Mammary epithelial cell (primary cell): ENCODE measurements at regions of chr19 and their contacts with region 1.

Region 1: GRCh38 chr19:46487802-46488445 is 7.7 kb downstream of the PNMA8B start:
- DNase-seq: peak; percentile 59
- H3K4me3 ChIP-seq: peak overlapping the region in 1 of 3 experiments; percentile 42
- H3K27ac ChIP-seq: no peak overlapping the region
- H3K4me1 ChIP-seq: peaks cover 6% of the 10 kb centered on the region
- H3K27me3 ChIP-seq: no peaks in the 10 kb centered on the region
- CTCF ChIP-seq: peak; percentile 86 to 95

Region 2: GRCh38 chr19:46283771-46284170 is 204.2 kb before region 1 on chr19:
- CTCF ChIA-PET with region 1: no interaction called
- dilution Hi-C with region 1: no loop called
- in situ Hi-C with region 1: no loop called
- intact Hi-C with region 1: loop called (anchors 1 kb)
- DNase-seq: no peak
- H3K4me3 ChIP-seq: no peak overlapping the region
- H3K27ac ChIP-seq: no peak overlapping the region
- H3K4me1 ChIP-seq: peaks cover under 1% of the 10 kb centered on the region
- H3K27me3 ChIP-seq: no peaks in the 10 kb centered on the region
- CTCF ChIP-seq: no peak

Region 3: GRCh38 chr19:46392243-46392801 is 95.6 kb before region 1 on chr19:
- CTCF ChIA-PET with region 1: no interaction called
- dilution Hi-C with region 1: no loop called
- in situ Hi-C with region 1: no loop called
- intact Hi-C with region 1: loop called (anchors 1 kb)
- DNase-seq: no peak
- H3K4me3 ChIP-seq: no peak overlapping the region
- H3K27ac ChIP-seq: no peak overlapping the region
- H3K4me1 ChIP-seq: no peaks in the 10 kb centered on the region
- H3K27me3 ChIP-seq: no peaks in the 10 kb centered on the region
- CTCF ChIP-seq: no peak

Region 4: GRCh38 chr19:46404055-46404752 is 83.7 kb before region 1 on chr19:
- CTCF ChIA-PET with region 1: no interaction called
- dilution Hi-C with region 1: loop called (anchors 5 kb)
- in situ Hi-C with region 1: loop called (anchors 5 kb)
- intact Hi-C with region 1: loop called (anchors 1 kb)
- DNase-seq: no peak
- H3K4me3 ChIP-seq: peak overlapping the region; percentile 18 to 49 (median 19)
- H3K27ac ChIP-seq: peak overlapping the region; percentile 14
- H3K4me1 ChIP-seq: peaks cover 29% of the 10 kb centered on the region
- H3K27me3 ChIP-seq: no peaks in the 10 kb centered on the region
- CTCF ChIP-seq: peak in 1 of 2 donors; percentile 17

Region 5: GRCh38 chr19:46447824-46448223 is 40.1 kb before region 1 on chr19:
- CTCF ChIA-PET with region 1: no interaction called
- dilution Hi-C with region 1: loop called (anchors 5 kb)
- in situ Hi-C with region 1: no loop called
- intact Hi-C with region 1: no loop called
- DNase-seq: no peak
- H3K4me3 ChIP-seq: no peak overlapping the region
- H3K27ac ChIP-seq: no peak overlapping the region
- H3K4me1 ChIP-seq: peaks cover 26% of the 10 kb centered on the region
- H3K27me3 ChIP-seq: no peaks in the 10 kb centered on the region
- CTCF ChIP-seq: no peak

Region 6: GRCh38 chr19:46542428-46543230 is 54.7 kb after region 1 on chr19:
- CTCF ChIA-PET with region 1: no interaction called
- dilution Hi-C with region 1: loop called (anchors 5 kb)
- in situ Hi-C with region 1: no loop called
- intact Hi-C with region 1: no loop called
- DNase-seq: peak; percentile 76
- H3K4me3 ChIP-seq: no peak overlapping the region
- H3K27ac ChIP-seq: no peak overlapping the region
- H3K4me1 ChIP-seq: no peaks in the 10 kb centered on the region
- H3K27me3 ChIP-seq: no peaks in the 10 kb centered on the region
- CTCF ChIP-seq: peak; percentile 72 to 75